Activated CD4-positive, alpha-beta T cell treated with anti-CD3 and anti-CD28 coated beads for 36 hours (primary cell): ENCODE measurements at regions of chr13 and their contacts with region 1.

Region 1: GRCh38 chr13:51803422-51804294 is at the start of gene DHRS12:
- DNase-seq: peak; percentile 90
- ATAC-seq: peak; percentile 77
- H3K4me3 Mint-ChIP-seq: peak within 1 kb of the TSS; percentile 87
- H3K27ac Mint-ChIP-seq: peak within 1 kb of the TSS; percentile 99
- H3K4me1 Mint-ChIP-seq: peaks cover 50% of the 10 kb centered on the region
- H3K27me3 Mint-ChIP-seq: no peaks in the 10 kb centered on the region
- total RNA-seq, gene DHRS12: 4.9 to 5.3 TPM

Region 2: DNA sequence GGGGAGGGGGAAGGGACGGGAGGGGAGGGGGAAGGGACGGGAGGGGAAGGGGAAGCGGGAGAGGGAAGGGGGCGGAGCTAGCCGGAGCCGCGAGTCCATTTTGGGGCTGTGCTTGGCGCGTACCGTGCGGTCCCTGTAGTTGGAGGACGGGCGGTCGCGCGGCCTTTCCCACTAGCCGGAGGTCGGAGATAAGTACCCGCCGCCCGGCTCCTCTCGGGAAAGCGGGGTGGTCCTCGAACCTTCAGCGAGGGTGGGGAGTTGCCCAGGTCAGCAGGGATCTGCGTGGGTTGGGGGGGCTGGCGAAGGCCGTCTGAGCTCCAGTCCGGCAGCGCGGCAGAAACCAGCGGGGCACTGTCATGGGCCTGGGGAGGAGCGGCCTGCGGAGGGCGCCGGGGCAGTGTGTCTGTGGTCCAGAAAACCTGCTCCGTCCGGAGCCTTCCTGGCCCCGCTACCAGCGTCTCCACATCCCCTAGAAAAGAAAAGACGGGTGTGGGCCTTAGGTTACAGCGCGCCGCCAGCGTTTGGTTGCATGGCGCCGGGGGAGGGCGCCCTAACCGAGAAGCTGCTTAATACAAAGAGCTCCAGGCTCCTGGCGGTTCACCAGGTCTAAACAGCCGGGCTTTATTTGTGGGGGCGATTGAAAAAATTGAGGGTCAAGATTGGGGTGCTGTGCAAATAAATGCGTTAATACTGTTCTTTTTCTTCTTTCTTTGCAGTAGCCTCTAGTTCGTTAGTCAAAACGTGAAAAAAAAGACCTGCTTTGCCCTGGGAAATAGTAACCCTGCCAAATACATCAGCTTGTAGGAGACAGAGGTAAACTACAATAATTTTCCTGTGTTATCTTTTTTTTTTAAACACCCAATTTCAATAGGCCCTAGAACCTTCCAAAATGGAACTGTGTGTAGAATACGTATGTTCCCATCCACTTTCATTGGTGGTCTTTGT is 1806.4 kb before region 1 on chr13 and contains the start of gene TRIM13:
- CTCF ChIA-PET with region 1: no interaction called
- POLR2A ChIA-PET with region 1: no interaction called
- intact Hi-C with region 1: loop called in 1 of 2 experiments (anchors 5 kb)
- DNase-seq: peak; percentile 90
- ATAC-seq: peak; percentile 86
- H3K4me3 Mint-ChIP-seq: peak within 1 kb of the TSS; percentile 77
- H3K27ac Mint-ChIP-seq: peak within 1 kb of the TSS; percentile 76
- H3K4me1 Mint-ChIP-seq: peaks cover 47% of the 10 kb centered on the region
- H3K27me3 Mint-ChIP-seq: no peaks in the 10 kb centered on the region
- total RNA-seq, gene TRIM13: 10.6 to 12.9 TPM

Region 3: GRCh38 chr13:51222037-51222685 is 581.5 kb before region 1 on chr13 and contains the start of gene FAM124A:
- CTCF ChIA-PET with region 1: no interaction called
- POLR2A ChIA-PET with region 1: no interaction called
- intact Hi-C with region 1: loop called in 1 of 2 experiments (anchors 1 kb)
- DNase-seq: peak; percentile 72
- ATAC-seq: peak; percentile 93
- H3K4me3 Mint-ChIP-seq: peak within 1 kb of the TSS; percentile 71
- H3K27ac Mint-ChIP-seq: no peak within 1 kb of the TSS
- H3K4me1 Mint-ChIP-seq: no peaks in the 10 kb centered on the region
- H3K27me3 Mint-ChIP-seq: peaks cover 43% of the 10 kb centered on the region
- total RNA-seq, gene FAM124A: 0.16 to 0.25 TPM

Region 4: DNA sequence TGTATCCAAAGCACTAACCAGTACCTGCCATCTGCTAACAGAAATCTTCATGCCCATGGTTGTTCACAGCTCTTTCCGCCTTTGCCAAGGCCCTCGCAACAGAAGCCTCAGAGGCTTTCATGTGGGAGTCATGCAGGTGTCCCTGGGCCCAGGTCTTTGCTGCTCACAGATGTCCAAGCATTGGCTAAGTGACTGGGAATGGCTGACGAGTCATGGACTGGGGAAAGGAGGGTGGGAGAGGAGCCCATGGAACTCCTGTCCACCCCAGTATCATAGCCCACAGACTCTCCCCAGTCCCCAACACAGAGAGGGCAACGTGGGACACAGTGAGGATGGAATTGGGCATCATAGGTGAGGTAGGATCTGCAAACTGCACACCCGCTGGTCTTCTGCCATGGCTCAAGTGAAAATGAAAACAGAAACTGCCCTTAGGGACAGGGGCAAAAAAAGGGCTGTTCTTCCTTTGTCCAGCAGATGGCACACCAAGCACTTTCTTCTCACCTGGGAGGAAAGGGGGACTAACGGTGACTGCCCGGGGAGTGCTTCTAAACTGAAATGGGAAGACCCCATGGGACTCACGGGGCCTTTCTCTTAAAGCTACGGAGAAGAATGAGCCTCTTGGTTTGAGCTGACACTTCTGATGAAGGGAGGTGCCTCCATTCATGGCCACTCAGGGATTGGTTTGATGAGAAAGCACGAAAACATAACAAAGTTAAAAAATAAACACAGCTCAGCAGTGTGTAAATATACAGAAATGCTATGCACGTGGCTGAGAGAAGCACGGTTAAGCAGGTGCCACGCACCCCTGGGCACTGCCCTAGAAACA is 11.4 kb after region 1 on chr13:
- CTCF ChIA-PET with region 1: interaction called, 154 read pairs
- POLR2A ChIA-PET with region 1: interaction called, 6 read pairs
- intact Hi-C with region 1: loop called (anchors 1 to 2 kb)
- DNase-seq: peak; percentile 83
- ATAC-seq: peak; percentile 70
- H3K4me3 Mint-ChIP-seq: peak overlapping the region; percentile 56
- H3K27ac Mint-ChIP-seq: peak overlapping the region; percentile 83
- H3K4me1 Mint-ChIP-seq: peaks cover 81% of the 10 kb centered on the region
- H3K27me3 Mint-ChIP-seq: no peaks in the 10 kb centered on the region

Region 5: DNA sequence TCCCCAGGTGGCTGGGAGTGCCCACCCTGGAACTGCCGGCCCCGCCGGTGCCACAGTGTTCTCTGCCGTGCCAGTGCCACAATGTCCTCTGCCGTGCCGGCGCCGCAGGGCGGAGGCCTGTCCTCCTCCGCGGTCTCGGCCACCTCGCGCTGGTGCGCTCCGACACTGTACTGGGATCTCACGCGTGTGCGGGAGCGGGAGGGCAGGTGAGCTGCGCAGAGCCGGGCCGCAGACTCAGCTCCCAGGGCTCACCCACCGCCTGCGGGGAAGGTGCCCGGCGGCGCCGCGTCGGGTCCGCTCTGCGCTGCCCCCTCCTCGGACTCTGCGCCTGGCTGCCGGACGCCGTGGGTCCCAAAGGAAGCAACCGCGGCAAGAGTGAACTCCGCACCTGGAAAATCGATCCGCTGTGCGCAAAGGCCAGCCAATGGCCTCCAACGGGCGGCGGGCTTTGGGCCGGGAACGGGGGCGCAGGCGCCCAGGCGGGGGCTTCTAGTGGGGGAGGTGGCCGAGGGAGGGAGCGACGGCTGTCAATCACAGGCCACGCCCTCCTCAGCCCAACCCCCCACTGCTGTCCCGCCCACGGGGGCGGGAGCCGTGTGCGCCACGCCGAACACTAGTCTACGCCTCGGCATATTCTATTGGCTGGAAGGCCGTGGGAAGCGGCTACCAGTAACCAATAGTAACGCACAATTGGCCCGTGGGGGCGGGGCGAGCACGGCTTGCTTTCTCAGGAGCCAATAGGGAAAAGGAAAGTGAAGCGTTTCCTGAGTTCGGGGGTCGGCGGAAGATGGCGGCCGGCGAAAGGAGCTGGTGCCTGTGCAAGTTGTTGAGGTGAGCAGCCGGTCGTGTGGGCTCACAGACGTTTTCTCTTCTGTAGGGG is 208.2 kb after region 1 on chr13 and contains the start of gene ALG11:
- CTCF ChIA-PET with region 1: no interaction called
- POLR2A ChIA-PET with region 1: no interaction called
- intact Hi-C with region 1: loop called in 1 of 2 experiments (anchors 1 kb)
- DNase-seq: peak; percentile 100
- ATAC-seq: peak; percentile 99
- H3K4me3 Mint-ChIP-seq: peak within 1 kb of the TSS; percentile 100
- H3K27ac Mint-ChIP-seq: peak within 1 kb of the TSS; percentile 91
- H3K4me1 Mint-ChIP-seq: peaks cover 20% of the 10 kb centered on the region
- H3K27me3 Mint-ChIP-seq: peaks cover 17% of the 10 kb centered on the region
- total RNA-seq, gene ALG11: 14.1 to 18.1 TPM

Region 6: GRCh38 chr13:52652196-52652979 is 848.7 kb after region 1 on chr13 and contains the start of gene SUGT1:
- CTCF ChIA-PET with region 1: no interaction called
- POLR2A ChIA-PET with region 1: no interaction called
- intact Hi-C with region 1: loop called in 1 of 2 experiments (anchors 2 kb)
- DNase-seq: peak; percentile 97
- ATAC-seq: peak; percentile 96
- H3K4me3 Mint-ChIP-seq: no peak within 1 kb of the TSS
- H3K27ac Mint-ChIP-seq: no peak within 1 kb of the TSS
- H3K4me1 Mint-ChIP-seq: peaks cover 14% of the 10 kb centered on the region
- H3K27me3 Mint-ChIP-seq: no peaks in the 10 kb centered on the region
- total RNA-seq, gene SUGT1: 58.3 to 64.8 TPM